ENCODE measurements at regions of chr12 and their contacts with region 1.

Region 1: DNA sequence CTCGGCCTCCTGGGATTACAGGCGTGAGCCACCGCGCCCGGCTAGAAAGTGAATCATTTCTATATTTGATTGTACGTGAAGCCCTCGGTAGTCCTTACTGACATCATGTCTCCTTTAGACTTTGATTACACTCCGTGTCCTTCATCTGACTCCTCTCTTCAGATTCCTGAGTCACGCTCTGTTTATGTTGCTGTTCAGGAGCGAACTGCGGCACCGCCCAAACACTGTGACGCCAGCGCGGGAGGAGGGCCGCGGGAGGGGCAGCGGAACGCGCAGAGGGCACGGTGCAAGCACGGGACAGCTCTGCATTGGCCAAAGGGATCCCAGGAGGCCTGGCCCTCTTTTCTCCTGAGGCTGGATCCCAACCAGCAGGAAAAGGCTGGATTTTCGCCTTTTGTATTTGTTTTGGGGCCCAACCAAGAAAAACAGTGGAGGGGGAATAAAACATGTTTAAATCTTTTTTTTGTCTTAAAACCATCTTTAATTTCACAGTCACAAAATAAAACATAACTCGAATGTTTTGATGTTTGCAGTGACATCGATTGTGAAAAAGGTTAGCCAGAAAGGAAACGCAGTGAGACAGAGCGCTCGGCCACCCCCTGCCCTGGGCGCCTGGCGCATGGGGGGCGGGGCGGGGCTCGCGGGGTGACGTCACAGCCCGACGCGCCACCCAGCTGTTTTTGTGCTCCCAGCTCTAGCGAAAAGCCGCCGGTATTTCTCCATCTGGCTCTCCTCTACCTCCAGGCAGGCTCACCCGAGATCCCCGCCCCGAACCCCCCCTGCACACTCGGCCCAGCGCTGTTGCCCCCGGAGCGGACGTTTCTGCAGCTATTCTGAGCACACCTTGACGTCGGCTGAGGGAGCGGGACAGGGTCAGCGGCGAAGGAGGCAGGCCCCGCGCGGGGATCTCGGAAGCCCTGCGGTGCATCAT is at the start of gene GABARAPL1:
- DNase-seq: peak; percentile 99
- H3K4me3 ChIP-seq: peak within 1 kb of the TSS; percentile 100
- H3K27ac ChIP-seq: peak within 1 kb of the TSS; percentile 100
- H3K27me3 ChIP-seq: no peaks in the 10 kb centered on the region
- CTCF ChIP-seq: no peak
- polyA plus RNA-seq, gene GABARAPL1: 181 and 196 TPM in 2 replicates

Region 2: DNA sequence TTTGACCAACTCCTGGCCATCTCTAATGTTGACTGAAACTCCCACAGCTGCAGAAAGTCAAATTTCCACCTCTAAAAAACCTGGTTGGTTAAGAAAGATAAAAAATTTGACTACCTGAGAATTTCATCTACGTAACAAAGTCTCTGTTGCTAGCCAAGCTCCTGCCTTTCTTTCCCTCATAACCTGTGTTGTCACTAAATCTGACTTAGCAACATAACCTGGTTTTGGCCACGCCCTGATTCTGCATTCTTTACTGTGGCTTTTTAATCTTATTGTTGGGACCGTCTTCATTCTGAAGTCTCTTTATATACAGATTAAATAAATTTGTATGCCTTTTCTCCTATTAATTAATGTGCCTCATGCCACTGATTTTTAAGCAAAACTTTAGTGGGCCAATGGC is 435.7 kb before region 1 on chr12:
- CTCF ChIA-PET with region 1: no interaction called
- POLR2A ChIA-PET with region 1: no interaction called
- DNase-seq: no peak
- H3K4me3 ChIP-seq: no peak overlapping the region
- H3K27ac ChIP-seq: no peak overlapping the region
- H3K27me3 ChIP-seq: no peaks in the 10 kb centered on the region
- CTCF ChIP-seq: no peak

Region 3: GRCh38 chr12:10167588-10167987 is 44.9 kb before region 1 on chr12:
- CTCF ChIA-PET with region 1: no interaction called
- POLR2A ChIA-PET with region 1: interaction called, 24 read pairs
- DNase-seq: no peak
- H3K4me3 ChIP-seq: no peak overlapping the region
- H3K27ac ChIP-seq: no peak overlapping the region
- H3K27me3 ChIP-seq: no peaks in the 10 kb centered on the region
- CTCF ChIP-seq: no peak

Region 4: GRCh38 chr12:10182354-10183061 is 30.0 kb before region 1 on chr12:
- CTCF ChIA-PET with region 1: no interaction called
- POLR2A ChIA-PET with region 1: interaction called, 13 read pairs
- DNase-seq: no peak
- H3K4me3 ChIP-seq: no peak overlapping the region
- H3K27ac ChIP-seq: peak overlapping the region; percentile 78
- H3K27me3 ChIP-seq: no peaks in the 10 kb centered on the region
- CTCF ChIP-seq: no peak

Region 5: GRCh38 chr12:10196210-10196609 is 16.3 kb before region 1 on chr12:
- CTCF ChIA-PET with region 1: interaction called, 5 read pairs
- POLR2A ChIA-PET with region 1: interaction called, 10 read pairs
- DNase-seq: no peak
- H3K4me3 ChIP-seq: no peak overlapping the region
- H3K27ac ChIP-seq: no peak overlapping the region
- H3K27me3 ChIP-seq: no peaks in the 10 kb centered on the region
- CTCF ChIP-seq: no peak

Region 6: DNA sequence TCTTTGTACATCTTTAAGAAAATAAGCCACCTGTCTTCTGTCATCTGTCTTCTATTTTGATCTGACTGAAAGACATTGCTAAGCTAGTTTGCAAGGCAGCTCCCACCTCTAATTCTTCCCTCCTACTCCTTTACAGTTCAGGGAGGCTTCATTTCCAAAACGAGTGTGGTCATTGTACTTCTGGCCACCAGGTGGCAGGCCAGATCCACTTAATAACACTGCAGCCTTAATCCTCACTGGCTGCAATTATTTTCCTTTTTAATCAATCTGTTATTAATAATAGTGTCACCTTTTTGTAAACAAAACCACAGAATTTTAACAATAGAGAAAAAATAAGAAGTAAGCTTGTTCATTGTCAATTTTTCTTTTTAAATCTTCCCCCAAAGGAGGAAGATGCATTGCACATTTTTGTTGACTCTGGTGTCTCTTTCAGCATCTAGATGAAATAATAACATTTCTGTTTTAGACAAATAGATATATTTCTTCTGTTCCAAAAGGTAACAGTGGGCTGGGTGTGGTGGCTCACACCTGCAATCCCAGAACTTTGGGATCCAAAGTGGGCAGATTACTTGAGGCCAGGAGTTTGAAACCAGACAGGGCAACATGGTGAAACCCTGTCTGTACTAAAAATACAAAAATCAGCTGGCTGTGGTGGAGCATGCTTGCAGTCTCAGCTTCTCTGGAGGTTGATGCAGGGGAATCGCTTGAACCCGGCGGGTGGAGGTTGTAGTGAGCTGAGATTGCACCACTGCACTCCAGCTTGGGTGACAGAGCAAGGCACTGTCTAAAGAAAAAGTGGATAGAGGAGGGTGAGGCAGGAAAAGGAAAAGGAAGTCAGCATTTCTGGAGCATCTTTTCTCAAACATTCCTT is 23.5 kb after region 1 on chr12:
- CTCF ChIA-PET with region 1: interaction called, 22 read pairs
- POLR2A ChIA-PET with region 1: no interaction called
- DNase-seq: no peak
- H3K4me3 ChIP-seq: no peak overlapping the region
- H3K27ac ChIP-seq: no peak overlapping the region
- H3K27me3 ChIP-seq: no peaks in the 10 kb centered on the region
- CTCF ChIP-seq: peak; percentile 83

Region 7: DNA sequence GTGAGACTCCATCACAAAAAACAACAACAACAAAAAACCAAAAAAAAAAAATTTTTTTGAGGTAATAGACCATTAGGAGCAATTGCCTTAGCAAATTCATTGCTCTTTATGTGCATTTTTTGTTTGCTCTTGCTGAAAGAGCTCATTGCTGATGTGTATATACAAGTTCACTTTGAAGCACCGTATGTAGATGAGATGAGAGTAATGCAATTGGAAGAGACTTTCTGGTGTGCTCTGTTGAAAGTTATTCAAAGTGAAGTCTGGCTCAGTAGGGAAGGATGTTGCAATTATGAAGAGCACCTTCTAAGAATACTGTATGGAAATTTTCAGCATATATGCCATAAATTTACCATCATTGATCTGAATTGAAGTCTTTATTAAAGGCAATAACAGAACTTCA is 48.5 kb after region 1 on chr12:
- CTCF ChIA-PET with region 1: no interaction called
- POLR2A ChIA-PET with region 1: no interaction called
- DNase-seq: no peak
- H3K4me3 ChIP-seq: no peak overlapping the region
- H3K27ac ChIP-seq: no peak overlapping the region
- H3K27me3 ChIP-seq: no peaks in the 10 kb centered on the region
- CTCF ChIP-seq: no peak

Measured in AG04450 (cell line).